ENCODE measurements at regions of chr7 and their contacts with region 1.

Region 1: GRCh38 chr7:28096713-28097112 is 83.9 kb downstream of the JAZF1 start:
- DNase-seq: peak; percentile 33
- ATAC-seq: no peak
- H3K4me3 Mint-ChIP-seq: no peak overlapping the region
- H3K27ac Mint-ChIP-seq: no peak overlapping the region
- H3K4me1 Mint-ChIP-seq: peaks cover 46% of the 10 kb centered on the region
- H3K27me3 Mint-ChIP-seq: no peaks in the 10 kb centered on the region
- CTCF ChIP-seq: peak; percentile 77

Region 2: GRCh38 chr7:27739909-27740448 is 356.7 kb before region 1 on chr7 and contains the start of gene TAX1BP1:
- CTCF ChIA-PET with region 1: interaction called, 13 read pairs
- POLR2A ChIA-PET with region 1: no interaction called
- DNase-seq: peak; percentile 91
- ATAC-seq: peak; percentile 80
- H3K4me3 Mint-ChIP-seq: peak within 1 kb of the TSS; percentile 94
- H3K27ac Mint-ChIP-seq: peak within 1 kb of the TSS; percentile 99
- H3K4me1 Mint-ChIP-seq: peaks cover 30% of the 10 kb centered on the region
- H3K27me3 Mint-ChIP-seq: no peaks in the 10 kb centered on the region
- CTCF ChIP-seq: no peak
- total RNA-seq, gene TAX1BP1: 51.3 to 69.9 TPM (median 52.4 TPM) in 3 replicates

Region 3: DNA sequence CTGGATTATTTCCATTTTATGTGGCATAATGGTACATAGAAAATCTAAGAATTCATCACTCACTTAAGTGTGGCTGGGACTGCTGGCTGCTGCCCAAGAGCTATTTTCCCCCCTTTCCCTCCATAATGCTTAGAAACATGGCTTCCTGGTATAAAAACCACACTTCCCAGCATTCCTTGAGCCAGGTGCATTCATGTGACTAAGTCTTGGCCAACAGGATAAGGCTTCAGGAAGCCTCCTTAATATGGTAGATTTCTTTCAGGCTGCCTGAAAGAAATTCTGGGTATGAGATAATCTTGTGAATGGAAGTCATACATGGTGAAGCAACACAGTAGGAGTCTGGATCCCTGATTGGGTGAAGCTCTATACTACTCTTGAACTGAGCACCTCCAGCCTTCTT is 94.1 kb before region 1 on chr7:
- CTCF ChIA-PET with region 1: no interaction called
- POLR2A ChIA-PET with region 1: no interaction called
- DNase-seq: no peak
- ATAC-seq: peak; percentile 84
- H3K4me3 Mint-ChIP-seq: no peak overlapping the region
- H3K27ac Mint-ChIP-seq: no peak overlapping the region
- H3K4me1 Mint-ChIP-seq: peaks cover 3% of the 10 kb centered on the region
- H3K27me3 Mint-ChIP-seq: no peaks in the 10 kb centered on the region
- CTCF ChIP-seq: no peak

Region 4: DNA sequence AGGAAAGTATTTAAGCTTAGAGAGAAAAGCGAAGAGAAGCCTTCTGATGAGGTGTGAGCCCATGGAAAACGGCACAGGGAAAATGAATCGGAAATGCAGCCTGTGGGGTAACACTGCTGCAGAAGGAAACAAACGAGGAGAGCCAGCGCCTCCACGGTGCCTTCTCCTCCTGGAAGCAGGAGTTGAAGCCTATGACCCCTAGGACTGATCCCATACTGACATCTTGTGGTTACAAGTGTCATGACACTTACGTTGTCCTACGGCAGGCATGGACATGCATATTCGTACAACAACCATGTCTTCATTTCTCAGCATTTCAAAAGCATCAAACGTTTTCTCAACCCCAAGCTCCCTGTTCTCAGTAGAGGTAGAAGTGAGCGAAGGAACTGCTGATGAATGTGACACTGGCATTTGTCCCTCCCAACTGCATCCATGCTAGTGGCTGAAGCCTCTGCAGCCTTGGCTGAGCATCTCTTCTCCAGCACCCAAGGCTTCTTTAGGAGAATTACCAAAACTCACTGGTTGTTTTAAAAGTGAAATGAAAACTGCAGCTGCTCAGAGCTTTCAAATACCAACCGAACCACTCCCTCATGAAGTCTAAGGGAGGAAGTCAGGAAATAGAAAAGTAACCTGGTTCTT is 76.3 kb before region 1 on chr7:
- CTCF ChIA-PET with region 1: interaction called, 26 read pairs
- POLR2A ChIA-PET with region 1: no interaction called
- DNase-seq: peak; percentile 65
- ATAC-seq: peak; percentile 96
- H3K4me3 Mint-ChIP-seq: no peak overlapping the region
- H3K27ac Mint-ChIP-seq: no peak overlapping the region
- H3K4me1 Mint-ChIP-seq: peaks cover 25% of the 10 kb centered on the region
- H3K27me3 Mint-ChIP-seq: no peaks in the 10 kb centered on the region
- CTCF ChIP-seq: peak; percentile 73

Region 5: DNA sequence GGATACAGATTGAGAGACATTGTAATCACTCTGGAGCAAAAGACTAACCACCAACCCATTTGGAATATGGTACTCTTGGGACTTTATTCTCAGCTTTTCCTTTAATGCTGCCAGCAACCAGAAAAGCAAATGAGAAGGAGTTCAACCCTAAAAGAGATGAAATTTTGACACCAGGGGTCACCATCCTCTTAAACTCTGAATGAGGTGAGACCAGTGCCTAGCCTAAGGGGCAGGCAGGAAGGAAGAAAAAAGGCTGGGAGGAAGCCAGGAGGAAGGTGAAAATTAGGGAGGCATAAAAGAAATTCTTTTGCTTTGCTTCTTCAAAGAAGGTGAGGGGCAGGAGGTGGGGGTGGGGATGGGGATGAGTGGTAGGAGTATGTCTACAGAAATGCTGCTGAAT is 51.9 kb before region 1 on chr7:
- CTCF ChIA-PET with region 1: interaction called, 42 read pairs
- POLR2A ChIA-PET with region 1: no interaction called
- DNase-seq: no peak
- ATAC-seq: peak; percentile 94
- H3K4me3 Mint-ChIP-seq: no peak overlapping the region
- H3K27ac Mint-ChIP-seq: no peak overlapping the region
- H3K4me1 Mint-ChIP-seq: peaks cover 21% of the 10 kb centered on the region
- H3K27me3 Mint-ChIP-seq: no peaks in the 10 kb centered on the region
- CTCF ChIP-seq: no peak

Region 6: GRCh38 chr7:28062197-28062991 is 34.3 kb before region 1 on chr7:
- CTCF ChIA-PET with region 1: interaction called, 307 read pairs
- POLR2A ChIA-PET with region 1: no interaction called
- DNase-seq: peak; percentile 87
- ATAC-seq: peak; percentile 97
- H3K4me3 Mint-ChIP-seq: no peak overlapping the region
- H3K27ac Mint-ChIP-seq: peak overlapping the region; percentile 77
- H3K4me1 Mint-ChIP-seq: peaks cover 48% of the 10 kb centered on the region
- H3K27me3 Mint-ChIP-seq: no peaks in the 10 kb centered on the region
- CTCF ChIP-seq: peak; percentile 52; the same call in 1 of the 2 replicates

Region 7: DNA sequence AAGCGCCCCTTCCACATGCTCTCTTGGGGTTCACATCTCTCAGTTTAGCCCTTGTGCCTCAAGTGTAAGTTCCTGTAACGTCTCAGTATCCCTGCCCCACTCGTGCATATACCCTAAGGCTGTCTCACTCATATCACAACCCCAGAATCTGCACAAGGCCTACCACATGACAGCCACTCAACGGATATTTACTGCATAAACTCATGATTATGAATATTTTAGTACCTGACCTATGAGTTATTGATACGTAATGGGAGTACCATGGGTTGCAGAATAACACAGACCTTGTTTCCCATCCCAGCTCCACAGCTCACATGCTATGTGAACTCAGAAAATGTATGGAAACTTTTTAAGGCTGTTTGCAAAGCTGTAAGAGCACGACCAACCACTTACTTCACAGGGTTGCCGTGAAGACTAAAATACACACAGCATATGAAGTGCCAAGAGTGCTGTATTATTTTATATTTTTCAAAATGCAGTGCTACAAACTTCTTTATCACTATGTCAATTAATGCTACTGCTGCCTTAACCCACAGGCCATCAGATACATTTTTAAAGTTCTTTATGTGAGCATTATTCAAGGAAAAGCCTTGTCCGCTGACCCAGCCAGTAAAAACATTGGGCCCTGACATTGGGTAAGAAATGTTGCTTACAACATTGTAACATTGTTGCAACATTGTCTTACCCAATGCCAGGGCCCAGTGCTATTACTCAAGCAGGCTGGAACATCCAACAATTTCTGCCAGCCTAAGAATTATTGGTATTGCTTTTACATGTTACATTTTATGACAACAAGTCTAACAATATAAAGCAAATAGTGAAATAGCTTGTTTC is 13.3 kb before region 1 on chr7:
- CTCF ChIA-PET with region 1: interaction called, 38 read pairs
- POLR2A ChIA-PET with region 1: no interaction called
- DNase-seq: no peak
- ATAC-seq: no peak
- H3K4me3 Mint-ChIP-seq: no peak overlapping the region
- H3K27ac Mint-ChIP-seq: no peak overlapping the region
- H3K4me1 Mint-ChIP-seq: peaks cover 23% of the 10 kb centered on the region
- H3K27me3 Mint-ChIP-seq: no peaks in the 10 kb centered on the region
- CTCF ChIP-seq: no peak

Region 8: GRCh38 chr7:28151965-28152364 is 55.3 kb after region 1 on chr7:
- CTCF ChIA-PET with region 1: no interaction called
- POLR2A ChIA-PET with region 1: no interaction called
- DNase-seq: no peak
- ATAC-seq: no peak
- H3K4me3 Mint-ChIP-seq: no peak overlapping the region
- H3K27ac Mint-ChIP-seq: no peak overlapping the region
- H3K4me1 Mint-ChIP-seq: peaks cover 34% of the 10 kb centered on the region
- H3K27me3 Mint-ChIP-seq: no peaks in the 10 kb centered on the region
- CTCF ChIP-seq: no peak